Caco-2 (cell line): ENCODE measurements at regions of chr10 and their contacts with region 1.

Region 1: GRCh38 chr10:122062831-122063674 is 74.1 kb downstream of the TACC2 start:
- DNase-seq: peak; percentile 85
- H3K4me3 ChIP-seq: no peak overlapping the region
- H3K4me3 Mint-ChIP-seq: peak overlapping the region; percentile 72
- H3K27ac Mint-ChIP-seq: peak overlapping the region; percentile 87
- H3K4me1 ChIP-seq: peaks cover 10% of the 10 kb centered on the region
- H3K4me1 Mint-ChIP-seq: peaks cover 22% of the 10 kb centered on the region
- H3K27me3 ChIP-seq: no peaks in the 10 kb centered on the region
- H3K27me3 Mint-ChIP-seq: no peaks in the 10 kb centered on the region
- CTCF ChIP-seq: no peak

Region 2: GRCh38 chr10:122102869-122103525 is 39.9 kb after region 1 on chr10:
- CTCF ChIA-PET with region 1: interaction called, 3 read pairs
- POLR2A ChIA-PET with region 1: no interaction called
- intact Hi-C with region 1: loop called (anchors 2 kb)
- DNase-seq: no peak
- H3K4me3 ChIP-seq: no peak overlapping the region
- H3K4me3 Mint-ChIP-seq: no peak overlapping the region
- H3K27ac Mint-ChIP-seq: peak overlapping the region; percentile 96
- H3K4me1 ChIP-seq: peaks cover 22% of the 10 kb centered on the region
- H3K4me1 Mint-ChIP-seq: peaks cover 23% of the 10 kb centered on the region
- H3K27me3 ChIP-seq: no peaks in the 10 kb centered on the region
- H3K27me3 Mint-ChIP-seq: no peaks in the 10 kb centered on the region
- CTCF ChIP-seq: no peak